Dorsolateral prefrontal cortex (tissue), 120 donors: ENCODE measurements at regions of chr3 and their contacts with region 1.

Region 1: DNA sequence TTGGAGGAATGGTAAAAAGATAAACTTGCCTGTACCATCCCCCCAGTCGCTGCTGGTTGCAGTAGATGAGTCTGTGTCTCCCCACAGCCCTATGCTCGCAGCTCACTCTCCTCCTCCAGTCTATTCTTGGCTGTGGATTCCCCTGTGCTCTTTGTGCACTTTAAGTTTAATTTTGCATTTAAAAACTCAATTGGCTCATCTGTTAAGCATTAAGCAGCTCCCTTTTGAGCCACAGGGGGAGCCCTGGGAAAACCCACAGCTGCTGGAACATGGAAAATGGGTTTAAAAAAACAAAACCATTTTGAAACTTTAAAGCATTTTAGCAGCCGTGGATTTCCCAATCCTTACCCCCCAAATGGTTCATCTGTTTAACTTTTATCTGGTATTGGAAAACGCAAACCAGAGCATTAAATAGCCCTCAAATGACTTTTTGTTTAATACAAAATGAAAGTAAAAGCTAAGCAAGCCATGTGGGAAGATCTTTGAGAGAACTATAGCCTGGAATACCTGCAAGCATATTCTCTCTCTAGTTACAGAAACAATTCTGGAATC is 536.9 kb downstream of the ZIC1 start:
- DNase-seq: peak in 2 of 10 donors; percentile 38 to 53
- H3K4me3 ChIP-seq: peak overlapping the region; percentile 6 to 65 (median 45)
- H3K27ac ChIP-seq: peak overlapping the region in 58 of 59 donors; percentile 29 to 95 (median 78)
- H3K27me3 ChIP-seq: no peaks in the 10 kb centered on the region
- CTCF ChIP-seq: peak; percentile 19 to 77 (median 56)

Region 2: GRCh38 chr3:147409143-147410115 is 536.6 kb before region 1 on chr3 and contains the start of gene ZIC1:
- intact Hi-C with region 1: loop called in 1 of 2 experiments (anchors 10 kb)
- DNase-seq: peak in 8 of 10 donors; percentile 63 to 93 (median 70)
- H3K4me3 ChIP-seq: peak within 1 kb of the TSS; percentile 44 to 80 (median 67)
- H3K27ac ChIP-seq: peak within 1 kb of the TSS; percentile 45 to 99 (median 85)
- H3K27me3 ChIP-seq: peaks cover 0 to 99% (median 75%) of the 10 kb centered on the region in 45 donors
- CTCF ChIP-seq: peak in 12 of 56 donors; percentile 9 to 40 (median 21)
- total RNA-seq, gene ZIC1: 17.4 to 211 (median 34.4) TPM

Region 3: DNA sequence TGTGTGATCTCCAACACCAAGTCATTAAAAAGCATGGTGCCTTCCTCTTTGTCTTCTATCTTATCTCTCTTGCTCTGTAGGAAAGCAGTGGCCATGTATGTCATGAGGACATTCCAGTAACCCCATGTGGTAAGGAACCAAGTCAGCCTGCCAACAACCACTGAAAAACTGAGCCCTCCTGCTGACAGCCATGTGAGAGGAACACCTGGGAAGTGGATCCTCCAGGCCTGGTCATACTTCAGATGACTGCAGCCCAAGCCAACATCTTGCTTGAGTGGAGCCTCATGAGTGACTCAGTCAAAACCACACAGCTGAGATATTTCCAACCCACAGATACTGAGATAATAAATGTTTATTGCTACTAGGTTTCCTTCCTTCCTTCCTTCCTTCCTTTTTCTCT is 60.5 kb after region 1 on chr3:
- intact Hi-C with region 1: loop called in 1 of 2 experiments (anchors 10 kb)
- DNase-seq: no peak
- H3K4me3 ChIP-seq: no peak overlapping the region
- H3K27ac ChIP-seq: no peak overlapping the region
- H3K27me3 ChIP-seq: no peaks in the 10 kb centered on the region
- CTCF ChIP-seq: no peak